GM10248 (cell line): ENCODE measurements at regions of chr6 and their contacts with region 1.

Region 1: DNA sequence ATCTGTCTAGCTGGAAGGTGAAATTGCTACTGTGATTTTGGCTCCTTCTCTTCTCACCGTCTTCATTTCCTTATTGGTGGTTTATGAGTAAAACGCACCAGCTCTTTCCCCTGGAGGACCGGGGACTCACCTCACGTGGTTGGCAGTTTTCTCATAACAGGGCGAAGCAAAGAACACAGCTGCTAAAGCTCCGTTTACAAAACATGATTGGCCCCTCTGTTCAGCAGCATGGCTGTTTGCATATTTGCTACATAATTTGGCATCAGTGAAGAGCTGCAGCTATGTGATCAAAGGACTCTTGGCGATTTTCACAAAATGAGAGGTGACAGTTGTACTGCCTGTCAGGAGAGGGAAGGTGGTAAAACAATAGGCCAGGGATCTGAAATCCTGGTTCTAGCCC is 20.5 kb upstream of the TMEM181 start:
- DNase-seq: no peak
- CTCF ChIP-seq: no peak

Region 2: DNA sequence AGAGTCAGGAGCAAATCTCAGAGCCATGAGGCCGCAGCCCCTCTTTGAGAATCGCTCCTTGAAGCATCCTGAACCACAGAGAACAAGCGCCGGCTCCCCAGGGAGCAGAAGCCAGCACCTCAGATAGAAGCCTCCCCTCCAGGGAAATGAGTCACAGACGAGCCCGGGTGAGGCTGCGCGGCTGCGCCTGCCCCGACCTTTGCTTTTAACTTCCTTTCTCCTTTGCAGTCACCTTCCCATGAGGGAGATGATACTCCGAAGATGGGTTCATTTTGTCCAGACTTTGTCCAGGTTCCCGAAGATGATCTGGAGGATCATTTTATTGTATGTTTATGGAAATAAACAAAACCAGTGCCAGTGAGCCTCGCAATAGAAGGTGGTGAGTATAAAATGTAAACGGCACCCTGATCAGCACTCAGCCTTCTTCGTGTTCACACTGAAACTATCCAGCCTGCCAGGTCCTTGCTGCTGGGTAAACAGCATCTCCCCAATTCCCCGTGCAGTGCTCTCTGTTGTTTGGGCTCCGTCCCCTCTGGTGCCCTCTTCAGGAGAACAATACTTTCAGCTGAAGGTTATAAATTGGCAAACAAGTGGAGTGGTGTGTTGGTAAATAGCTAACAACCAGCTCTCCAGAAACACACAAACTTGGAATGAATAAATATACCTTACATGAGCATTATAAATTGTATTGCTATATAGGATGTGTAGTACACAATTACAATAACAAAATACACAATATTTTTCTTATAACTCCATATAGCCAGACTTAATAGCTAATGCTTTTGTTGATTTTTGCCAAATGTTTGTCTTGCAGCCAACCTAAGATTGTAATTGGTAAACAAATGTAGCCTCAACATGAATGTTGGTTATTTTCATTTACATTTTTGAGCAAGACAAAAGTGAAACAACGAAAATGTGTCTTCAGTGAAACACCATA is 21.0 kb before region 1 on chr6:
- CTCF ChIA-PET with region 1: interaction called, 13 read pairs
- POLR2A ChIA-PET with region 1: no interaction called
- DNase-seq: peak; percentile 77
- CTCF ChIP-seq: peak; percentile 55